ENCODE measurements at regions of chr9 and their contacts with region 1.

Region 1: GRCh38 chr9:109469646-109470358 is 28.3 kb downstream of the PTPN3 start:
- DNase-seq: peak; percentile 69 to 86
- ATAC-seq: peak; percentile 97 to 98
- H3K4me3 ChIP-seq: no peak overlapping the region
- H3K27ac ChIP-seq: peak overlapping the region; percentile 66 to 79
- H3K4me1 ChIP-seq: peaks cover 55% of the 10 kb centered on the region
- CTCF ChIP-seq: peak; percentile 93
- EP300 ChIP-seq: no peak
- POLR2A ChIP-seq: no peak
- RAD21 ChIP-seq: peak; percentile 89 to 92

Region 2: DNA sequence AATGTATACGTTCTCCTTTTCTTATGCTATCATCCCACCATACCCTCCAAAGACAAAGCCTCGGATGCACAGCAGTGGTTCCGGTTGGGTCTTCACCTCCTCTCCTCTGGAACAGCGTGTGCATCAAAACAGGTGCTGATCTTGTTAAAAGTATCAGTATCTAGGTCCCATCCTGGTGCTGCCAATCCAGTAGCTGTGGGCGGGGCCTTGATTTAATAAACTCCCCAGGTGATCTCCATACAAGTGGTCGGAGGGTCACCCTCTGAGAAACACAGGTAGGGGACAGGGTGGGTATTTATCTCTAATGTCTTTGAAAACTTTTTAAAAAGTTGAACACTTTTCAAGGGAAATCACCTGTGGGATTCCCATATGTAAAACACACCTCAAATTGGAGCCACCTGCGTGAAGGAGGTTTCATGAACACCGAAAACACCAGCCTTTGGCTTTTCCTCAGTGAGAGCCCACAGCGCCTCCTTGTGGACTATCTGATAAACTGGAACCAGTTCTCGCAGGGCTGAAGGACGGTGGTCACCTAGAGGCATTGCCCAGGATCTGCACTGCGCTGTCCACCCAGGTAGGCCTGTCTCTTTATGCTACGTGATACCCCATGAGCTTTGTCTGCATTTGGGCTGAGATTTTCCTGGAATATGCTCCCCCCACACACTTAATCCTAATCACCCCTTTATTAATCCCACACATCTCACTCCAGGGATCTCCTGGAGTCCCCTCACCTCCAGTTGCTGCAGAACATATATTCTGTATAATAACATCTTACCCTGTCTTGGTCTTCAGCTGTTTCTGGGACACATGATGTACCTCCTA is 68.4 kb before region 1 on chr9:
- CTCF ChIA-PET with region 1: interaction called, 18 read pairs
- POLR2A ChIA-PET with region 1: no interaction called
- DNase-seq: peak; percentile 67 to 74
- ATAC-seq: peak; percentile 98
- H3K4me3 ChIP-seq: no peak overlapping the region
- H3K27ac ChIP-seq: no peak overlapping the region
- H3K4me1 ChIP-seq: no peaks in the 10 kb centered on the region
- CTCF ChIP-seq: peak; percentile 91
- EP300 ChIP-seq: no peak
- POLR2A ChIP-seq: no peak
- RAD21 ChIP-seq: peak; percentile 78 to 80

Region 3: GRCh38 chr9:109440797-109441287 is 29.0 kb before region 1 on chr9:
- CTCF ChIA-PET with region 1: interaction called, 147 read pairs
- POLR2A ChIA-PET with region 1: interaction called, 5 read pairs
- DNase-seq: peak; percentile 82 to 90
- ATAC-seq: peak; percentile 96
- H3K4me3 ChIP-seq: no peak overlapping the region
- H3K27ac ChIP-seq: peak overlapping the region; percentile 34 to 57; a peak in 5 of 6 replicates
- H3K4me1 ChIP-seq: peaks cover 20% of the 10 kb centered on the region
- CTCF ChIP-seq: peak; percentile 85
- EP300 ChIP-seq: no peak
- POLR2A ChIP-seq: no peak
- RAD21 ChIP-seq: peak; percentile 72 to 80

Region 4: GRCh38 chr9:109483744-109484429 is 14.1 kb after region 1 on chr9:
- CTCF ChIA-PET with region 1: interaction called, 21 read pairs
- POLR2A ChIA-PET with region 1: no interaction called
- DNase-seq: no peak
- ATAC-seq: no peak; a peak in 1 of 6 replicates
- H3K4me3 ChIP-seq: no peak overlapping the region
- H3K27ac ChIP-seq: no peak overlapping the region
- H3K4me1 ChIP-seq: peaks cover 24% of the 10 kb centered on the region
- CTCF ChIP-seq: no peak
- EP300 ChIP-seq: no peak
- POLR2A ChIP-seq: no peak
- RAD21 ChIP-seq: no peak

Region 5: GRCh38 chr9:109509611-109510010 is 39.8 kb after region 1 on chr9:
- CTCF ChIA-PET with region 1: interaction called, 12 read pairs
- POLR2A ChIA-PET with region 1: no interaction called
- DNase-seq: no peak
- ATAC-seq: no peak
- H3K4me3 ChIP-seq: no peak overlapping the region
- H3K27ac ChIP-seq: peak overlapping the region in 1 of 2 experiments; percentile 19; a peak in 1 of 6 replicates
- H3K4me1 ChIP-seq: peaks cover 26% of the 10 kb centered on the region
- CTCF ChIP-seq: no peak
- EP300 ChIP-seq: no peak
- POLR2A ChIP-seq: no peak
- RAD21 ChIP-seq: no peak

Region 6: DNA sequence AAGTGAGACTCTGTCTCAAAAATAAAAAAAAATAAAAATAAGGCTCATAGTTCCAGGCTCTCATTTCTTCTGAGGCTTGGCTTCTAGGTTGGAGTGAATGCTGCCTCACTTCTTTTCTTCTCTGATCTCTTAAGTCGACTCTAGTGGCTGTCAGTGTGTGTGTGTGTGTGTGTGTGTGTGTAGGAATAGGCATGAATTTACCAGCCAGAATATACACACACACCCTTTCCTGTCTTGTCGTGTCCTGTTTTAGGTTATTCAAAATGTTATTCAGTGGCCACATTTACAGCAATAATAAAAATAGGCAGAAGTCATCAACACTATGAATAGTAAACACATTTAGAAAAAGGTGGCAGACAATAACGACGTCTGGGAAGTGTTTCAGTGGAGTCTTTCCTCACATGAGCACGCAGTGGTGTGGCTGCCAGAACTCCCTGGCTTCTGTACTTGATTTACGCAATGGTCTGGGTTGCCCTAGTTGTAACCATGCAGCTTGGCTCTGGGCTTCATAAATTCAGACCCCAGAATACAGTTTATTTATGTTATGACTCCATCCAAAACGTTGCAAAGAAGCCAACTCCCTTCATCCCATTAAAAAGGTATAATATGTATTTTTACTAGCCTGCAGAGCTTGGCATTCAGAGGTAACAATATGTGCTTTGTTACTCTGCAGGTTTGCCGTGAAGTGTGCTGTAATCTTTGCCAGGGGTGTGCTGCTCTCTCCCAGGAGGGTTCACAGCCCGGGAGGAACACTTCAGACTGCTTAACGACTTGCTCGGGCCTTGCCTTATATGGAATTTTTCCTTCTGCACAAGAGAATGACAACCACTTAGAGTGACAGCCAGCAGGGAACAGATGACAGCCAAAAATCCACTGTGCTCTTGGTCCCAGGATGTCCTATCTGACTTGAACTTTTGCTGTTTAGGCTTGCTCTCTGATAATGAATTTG is 275.8 kb after region 1 on chr9:
- CTCF ChIA-PET with region 1: no interaction called
- POLR2A ChIA-PET with region 1: no interaction called
- DNase-seq: no peak
- ATAC-seq: no peak
- H3K4me3 ChIP-seq: no peak overlapping the region
- H3K27ac ChIP-seq: no peak overlapping the region
- H3K4me1 ChIP-seq: no peaks in the 10 kb centered on the region
- CTCF ChIP-seq: no peak
- EP300 ChIP-seq: no peak
- POLR2A ChIP-seq: no peak
- RAD21 ChIP-seq: no peak